GM18951 (cell line): ENCODE measurements at regions of chr5 and their contacts with region 1.

Region 1: GRCh38 chr5:178279725-178280438 is 47.3 kb upstream of the PHYKPL start:
- POLR2A ChIP-seq: no peak

Region 2: DNA sequence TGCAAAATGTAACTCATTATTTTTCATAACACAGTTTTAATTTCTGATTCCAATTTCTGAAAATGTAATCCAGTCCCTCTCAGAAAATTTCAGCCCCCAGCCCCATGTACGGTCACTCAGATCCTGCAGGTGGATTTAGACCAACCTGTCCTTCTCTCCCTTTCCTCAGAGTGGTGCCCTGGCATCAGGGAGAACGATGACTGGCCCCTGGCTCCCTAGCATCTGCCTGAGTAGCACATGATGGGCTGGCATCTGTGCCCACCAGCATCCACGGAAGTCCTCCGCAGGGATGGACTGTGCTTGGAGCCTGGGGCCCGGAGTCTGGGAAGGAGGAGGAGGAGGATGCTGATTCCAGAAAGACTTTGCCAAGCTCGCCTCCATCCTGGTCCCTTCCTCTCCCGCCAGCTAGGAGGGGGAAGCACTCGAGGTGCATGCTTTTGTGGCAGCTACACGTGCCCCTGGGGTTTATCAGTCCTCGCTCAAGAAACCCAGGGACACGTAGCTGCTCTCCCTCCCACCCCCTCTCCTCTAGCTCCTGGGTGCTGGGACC is 1216.1 kb after region 1 on chr5:
- in situ Hi-C with region 1: loop called (anchors 25 kb)
- POLR2A ChIP-seq: no peak